ENCODE measurements at regions of chr2 and their contacts with region 1.

Region 1: DNA sequence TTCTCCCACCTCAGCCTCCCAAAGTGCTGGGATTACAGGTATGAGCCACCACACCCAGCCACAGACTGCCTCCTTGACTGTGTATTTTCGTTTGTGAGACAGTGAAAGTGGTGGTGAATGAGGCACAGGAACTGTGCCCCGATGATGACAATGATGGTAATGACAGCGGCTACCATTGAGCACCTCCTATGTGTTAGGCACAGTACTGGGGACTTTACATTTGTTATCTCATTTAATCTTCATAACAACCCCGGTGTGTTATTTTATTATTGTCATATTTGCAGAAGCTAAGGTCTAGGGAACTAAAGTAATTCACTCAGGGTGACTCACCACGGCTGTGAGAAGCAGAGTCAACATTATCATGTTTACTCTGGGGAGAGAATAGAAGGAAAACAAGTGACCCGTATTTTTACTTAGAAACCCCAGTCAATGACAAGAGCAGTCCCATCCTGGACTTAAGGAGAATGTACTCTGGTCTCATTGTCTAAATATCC is 77.6 kb upstream of the ALPP start:
- DNase-seq: no peak
- H3K4me3 ChIP-seq: no peak overlapping the region
- CTCF ChIP-seq: no peak
- POLR2A ChIP-seq: no peak

Region 2: GRCh38 chr2:232026910-232027309 is 274.0 kb before region 1 on chr2:
- intact Hi-C with region 1: loop called (anchors 10 kb)
- DNase-seq: no peak
- H3K4me3 ChIP-seq: no peak overlapping the region
- CTCF ChIP-seq: no peak
- POLR2A ChIP-seq: no peak

Region 3: DNA sequence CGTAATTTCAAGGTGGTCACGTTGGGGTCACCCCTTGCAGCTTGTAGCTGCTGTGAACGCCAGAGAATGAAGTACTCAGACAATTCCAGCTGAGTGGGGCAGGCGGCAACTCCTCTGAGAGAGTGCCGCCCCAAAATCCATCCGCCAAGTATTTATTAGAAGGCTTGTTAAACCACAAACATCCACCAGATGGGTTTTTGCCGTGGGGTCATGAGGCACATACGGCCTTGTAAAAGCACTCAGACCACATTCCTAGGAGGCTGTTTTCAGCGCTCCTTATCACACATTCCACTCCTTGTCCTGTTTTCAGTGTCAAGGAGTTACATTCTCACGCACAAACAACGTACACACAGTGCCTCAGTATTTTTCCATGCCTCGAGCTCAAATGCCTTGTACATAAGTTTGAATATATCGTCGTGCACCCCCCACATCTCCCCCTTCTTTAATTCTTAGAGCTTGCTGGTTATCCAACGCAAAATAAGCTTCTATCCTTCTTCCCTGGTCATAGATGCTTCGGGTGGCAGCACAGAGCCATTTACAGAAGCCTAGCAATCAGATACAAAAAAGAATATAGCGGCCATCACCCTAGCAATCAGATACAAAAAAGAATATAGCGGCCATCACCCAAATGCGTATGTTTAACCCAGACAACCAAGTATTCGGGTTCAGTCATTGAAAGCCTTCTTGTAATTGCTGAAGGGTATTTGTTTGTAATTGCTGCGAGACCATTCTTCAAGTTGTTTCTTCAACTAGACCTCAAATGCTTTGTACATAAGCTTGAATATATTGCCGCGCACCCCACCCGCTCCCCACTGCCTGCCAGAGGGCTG is 84.9 kb after region 1 on chr2:
- intact Hi-C with region 1: no loop called
- DNase-seq: no peak
- H3K4me3 ChIP-seq: no peak overlapping the region
- CTCF ChIP-seq: no peak
- POLR2A ChIP-seq: no peak

Region 4: DNA sequence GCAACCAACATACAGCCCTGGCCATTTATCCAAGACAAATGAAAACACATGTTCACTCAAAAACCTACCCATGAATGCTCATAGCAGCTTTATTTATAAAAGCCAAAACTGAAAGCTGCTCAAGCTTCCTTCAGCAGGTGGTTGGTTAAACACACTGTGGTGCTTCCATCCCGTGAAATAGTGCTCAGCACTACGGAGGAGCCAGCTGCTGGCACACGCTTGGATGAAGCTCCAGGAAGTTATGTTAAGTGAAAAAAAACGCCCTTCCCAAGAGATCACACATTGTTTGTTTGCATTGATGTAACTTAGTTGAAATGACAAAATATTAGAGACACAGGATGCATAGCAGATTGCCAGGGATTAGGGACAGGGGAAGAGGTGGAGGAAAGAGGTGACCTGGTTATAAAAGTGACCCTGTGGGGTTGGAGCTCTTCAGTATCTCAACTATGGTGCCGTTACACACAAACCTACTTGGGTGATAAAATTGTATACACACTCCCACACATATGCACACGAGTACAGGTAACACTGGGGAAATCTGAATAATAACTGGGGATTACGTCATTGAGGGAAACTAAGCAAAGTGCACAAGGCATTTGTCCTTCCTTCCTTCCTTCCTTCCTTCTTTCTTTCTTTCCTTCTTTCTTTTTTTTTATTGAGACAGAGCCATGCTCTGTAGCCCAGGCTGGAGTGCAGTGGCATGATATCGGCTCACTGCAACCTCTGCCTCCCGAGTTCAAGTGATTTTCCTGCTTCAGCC is 99.5 kb after region 1 on chr2:
- intact Hi-C with region 1: no loop called
- DNase-seq: no peak
- H3K4me3 ChIP-seq: no peak overlapping the region
- CTCF ChIP-seq: no peak
- POLR2A ChIP-seq: no peak